GM12878 (cell line): ENCODE measurements at regions of chr4 and their contacts with region 1.

Region 1: DNA sequence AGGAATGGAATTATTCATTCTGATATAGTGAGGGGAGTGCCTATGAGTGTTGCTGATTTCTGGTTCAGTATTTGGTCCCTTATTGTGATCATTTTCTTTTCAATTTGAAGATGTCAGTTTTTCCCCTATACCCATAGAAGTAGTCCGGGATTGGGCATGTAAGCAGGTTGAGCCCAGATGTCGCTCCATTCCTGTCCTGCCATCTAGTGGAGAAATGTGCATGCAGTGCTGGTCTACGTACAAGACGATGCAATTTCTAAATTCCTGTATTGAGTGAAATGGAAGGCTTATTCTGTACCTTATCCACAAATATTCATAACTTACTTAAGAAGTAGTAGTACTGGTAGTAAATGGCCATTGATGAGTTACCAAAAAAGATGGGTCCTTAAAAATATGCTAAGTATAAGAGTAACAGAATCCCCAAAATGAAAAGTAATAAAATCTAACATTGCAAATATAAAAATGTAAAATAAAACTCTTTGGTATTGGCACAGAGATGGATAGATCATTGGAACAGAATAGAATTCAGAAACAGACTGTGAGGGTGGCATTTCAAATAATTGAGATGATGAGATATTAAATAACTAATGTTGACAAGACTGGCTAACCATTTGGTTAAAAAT is 60.9 kb downstream of the UGT8 start:
- DNase-seq: peak; percentile 32
- ATAC-seq: peak; percentile 99
- H3K4me3 ChIP-seq: no peak overlapping the region
- H3K27ac ChIP-seq: no peak overlapping the region
- H3K4me1 ChIP-seq: no peaks in the 10 kb centered on the region
- H3K27me3 ChIP-seq: no peaks in the 10 kb centered on the region
- CTCF ChIP-seq: peak; percentile 78 to 88 (median 84)
- EP300 ChIP-seq: no peak
- POLR2A ChIP-seq: no peak
- RAD21 ChIP-seq: peak; percentile 94

Region 2: GRCh38 chr4:114386637-114387233 is 272.8 kb before region 1 on chr4:
- CTCF ChIA-PET with region 1: interaction called, 43 read pairs
- POLR2A ChIA-PET with region 1: interaction called, 4 read pairs
- RAD21 ChIA-PET with region 1: interaction called, 21 read pairs
- SMC1A ChIA-PET with region 1: interaction called, 23 read pairs
- in situ Hi-C with region 1: loop called (anchors 5 kb)
- intact Hi-C with region 1: loop called (anchors 1 kb)
- DNase-seq: peak; percentile 5
- ATAC-seq: peak; percentile 67
- H3K4me3 ChIP-seq: no peak overlapping the region
- H3K27ac ChIP-seq: no peak overlapping the region
- H3K4me1 ChIP-seq: no peaks in the 10 kb centered on the region
- H3K27me3 ChIP-seq: no peaks in the 10 kb centered on the region
- CTCF ChIP-seq: peak; percentile 49 to 76 (median 53)
- EP300 ChIP-seq: no peak
- POLR2A ChIP-seq: no peak
- RAD21 ChIP-seq: peak; percentile 92

Region 3: GRCh38 chr4:114393295-114394038 is 266.0 kb before region 1 on chr4:
- CTCF ChIA-PET with region 1: interaction called, 43 read pairs
- POLR2A ChIA-PET with region 1: no interaction called
- RAD21 ChIA-PET with region 1: interaction called, 21 read pairs
- SMC1A ChIA-PET with region 1: interaction called, 23 read pairs
- in situ Hi-C with region 1: loop called (anchors 5 kb)
- intact Hi-C with region 1: no loop called
- DNase-seq: no peak
- ATAC-seq: no peak
- H3K4me3 ChIP-seq: no peak overlapping the region
- H3K27ac ChIP-seq: no peak overlapping the region
- H3K4me1 ChIP-seq: no peaks in the 10 kb centered on the region
- H3K27me3 ChIP-seq: no peaks in the 10 kb centered on the region
- CTCF ChIP-seq: no peak
- EP300 ChIP-seq: no peak
- POLR2A ChIP-seq: no peak
- RAD21 ChIP-seq: no peak

Region 4: GRCh38 chr4:114417214-114417613 is 242.3 kb before region 1 on chr4:
- CTCF ChIA-PET with region 1: interaction called, 11 read pairs
- POLR2A ChIA-PET with region 1: no interaction called
- RAD21 ChIA-PET with region 1: no interaction called
- SMC1A ChIA-PET with region 1: interaction called, 5 read pairs
- in situ Hi-C with region 1: no loop called
- intact Hi-C with region 1: no loop called
- DNase-seq: no peak
- ATAC-seq: no peak
- H3K4me3 ChIP-seq: no peak overlapping the region
- H3K27ac ChIP-seq: no peak overlapping the region
- H3K4me1 ChIP-seq: no peaks in the 10 kb centered on the region
- H3K27me3 ChIP-seq: no peaks in the 10 kb centered on the region
- CTCF ChIP-seq: peak in 1 of 3 experiments; percentile 18; a peak in 1 of 6 replicates
- EP300 ChIP-seq: no peak
- POLR2A ChIP-seq: no peak
- RAD21 ChIP-seq: peak; percentile 62

Region 5: DNA sequence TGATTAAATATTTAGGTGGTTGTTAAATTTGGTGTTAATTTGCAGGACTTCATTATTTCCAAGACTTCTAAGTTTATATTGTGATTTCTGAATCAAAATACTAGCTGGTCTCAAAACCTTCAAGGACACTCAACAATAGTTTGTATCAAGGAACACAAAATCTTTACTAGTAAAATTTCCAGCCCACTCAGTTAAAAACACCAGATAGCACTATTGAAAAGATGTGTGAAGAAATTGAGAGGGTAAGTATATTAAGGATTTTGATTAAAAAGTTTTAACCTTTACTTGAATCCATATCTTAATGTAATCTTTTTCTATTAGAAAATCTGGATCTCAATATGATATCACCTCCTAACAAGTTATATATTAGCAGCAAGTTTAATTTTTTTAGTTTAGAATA is 150.2 kb before region 1 on chr4:
- CTCF ChIA-PET with region 1: interaction called, 5 read pairs
- POLR2A ChIA-PET with region 1: no interaction called
- RAD21 ChIA-PET with region 1: no interaction called
- SMC1A ChIA-PET with region 1: interaction called, 4 read pairs
- in situ Hi-C with region 1: no loop called
- intact Hi-C with region 1: loop called (anchors 1 kb)
- DNase-seq: no peak
- ATAC-seq: no peak
- H3K4me3 ChIP-seq: no peak overlapping the region
- H3K27ac ChIP-seq: no peak overlapping the region
- H3K4me1 ChIP-seq: no peaks in the 10 kb centered on the region
- H3K27me3 ChIP-seq: no peaks in the 10 kb centered on the region
- CTCF ChIP-seq: no peak
- EP300 ChIP-seq: no peak
- POLR2A ChIP-seq: no peak
- RAD21 ChIP-seq: 0 out of 2 replicates have a peak, but pooled peaks have one; percentile 15

Region 6: DNA sequence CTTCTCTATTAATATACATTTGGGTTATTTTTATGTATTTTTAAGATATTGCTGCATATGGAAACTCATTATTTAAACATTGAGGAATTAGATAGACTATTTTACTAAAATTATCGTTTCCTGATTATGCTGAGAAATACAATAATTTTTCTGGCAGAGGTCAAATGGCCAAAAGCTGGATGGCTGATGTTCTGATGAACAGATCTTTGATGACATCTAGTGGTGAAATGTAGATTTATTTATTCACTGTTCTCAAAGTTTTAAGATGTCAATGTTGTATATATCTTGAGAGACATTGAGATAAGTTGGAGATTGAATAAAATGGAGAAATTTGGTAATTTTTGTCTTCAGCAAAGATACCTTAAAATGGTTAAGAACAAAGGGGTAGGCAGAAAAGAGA is 35.3 kb after region 1 on chr4:
- CTCF ChIA-PET with region 1: interaction called, 18 read pairs
- POLR2A ChIA-PET with region 1: no interaction called
- RAD21 ChIA-PET with region 1: interaction called, 5 read pairs
- SMC1A ChIA-PET with region 1: no interaction called
- in situ Hi-C with region 1: no loop called
- intact Hi-C with region 1: loop called (anchors 1 kb)
- DNase-seq: peak; percentile 11
- ATAC-seq: peak; percentile 48
- H3K4me3 ChIP-seq: no peak overlapping the region
- H3K27ac ChIP-seq: no peak overlapping the region
- H3K4me1 ChIP-seq: peaks cover 14% of the 10 kb centered on the region
- H3K27me3 ChIP-seq: no peaks in the 10 kb centered on the region
- CTCF ChIP-seq: peak; percentile 43 to 58 (median 44); a peak in 4 of 6 replicates
- EP300 ChIP-seq: no peak
- POLR2A ChIP-seq: no peak
- RAD21 ChIP-seq: peak; percentile 80